Endothelial cell of umbilical vein (primary cell): ENCODE measurements at regions of chr6 and their contacts with region 1.

Region 1: DNA sequence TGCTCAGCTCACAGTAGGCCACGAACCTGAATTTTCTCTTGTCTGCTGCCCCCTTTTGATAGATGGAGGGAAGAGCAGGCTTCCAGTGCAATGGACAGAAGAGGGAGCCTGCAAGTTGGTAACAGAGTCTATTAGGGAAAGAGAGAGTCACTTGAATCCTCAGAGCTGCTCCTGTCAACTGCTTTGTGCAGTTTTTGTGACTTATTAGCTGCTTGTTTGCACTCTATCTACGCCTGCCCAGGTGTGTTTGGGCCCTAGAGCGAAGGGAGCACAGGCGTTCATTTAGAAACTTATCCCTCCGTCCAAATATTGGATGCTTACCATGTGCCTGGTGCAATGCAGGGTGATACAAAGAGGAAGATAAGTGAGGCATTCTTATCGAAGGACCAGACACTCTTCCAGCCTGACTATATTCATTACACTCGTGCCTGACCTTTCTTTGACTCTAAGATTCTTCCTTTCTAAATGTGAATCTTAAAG is 11.6 kb upstream of the SLC2A12 start:
- DNase-seq: peak; percentile 80
- H3K4me3 ChIP-seq: no peak overlapping the region
- H3K27ac ChIP-seq: no peak overlapping the region
- H3K4me1 ChIP-seq: peaks cover 10% of the 10 kb centered on the region
- H3K27me3 ChIP-seq: no peaks in the 10 kb centered on the region
- CTCF ChIP-seq: peak; percentile 85 to 89
- POLR2A ChIP-seq: no peak

Region 2: DNA sequence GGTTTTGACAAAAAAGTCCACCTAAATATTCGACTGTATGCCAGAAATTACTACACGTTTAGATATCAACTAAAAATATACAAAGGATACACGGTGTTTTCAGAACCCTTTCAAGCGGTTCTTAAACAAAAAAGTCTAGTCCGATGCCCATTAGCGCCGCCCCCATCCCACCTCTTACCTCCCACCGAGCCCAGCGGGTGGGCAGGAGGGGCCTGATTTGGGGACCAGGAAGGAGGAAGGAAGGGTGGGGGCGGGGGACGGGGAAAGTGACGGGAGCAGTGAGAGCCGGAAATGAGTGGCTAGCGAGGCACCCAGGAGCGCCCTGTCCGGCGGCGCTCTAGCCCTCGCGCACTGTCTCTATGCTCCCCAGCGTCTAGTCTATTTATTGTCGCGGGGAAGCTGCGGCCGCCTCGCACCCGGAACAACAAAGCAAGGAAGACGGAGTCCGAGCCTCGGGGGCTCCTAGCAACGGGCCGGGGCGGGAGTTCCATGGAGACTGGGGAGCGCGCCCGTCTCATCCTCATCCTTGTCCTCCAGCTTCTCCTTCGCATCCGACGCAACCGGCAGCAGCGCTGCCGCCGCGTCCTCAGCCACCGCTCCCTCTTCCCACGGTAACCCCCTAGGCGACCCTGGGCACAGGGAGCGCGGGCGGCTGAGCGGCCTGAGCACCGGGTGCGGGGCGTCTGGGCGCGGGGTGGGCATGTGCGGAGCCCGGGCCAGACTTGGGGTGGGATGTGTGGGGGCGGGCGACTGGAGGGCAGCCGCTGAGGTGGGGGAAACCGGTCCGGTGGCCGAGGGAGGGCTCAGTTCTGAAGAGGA is 111.0 kb before region 1 on chr6 and contains the start of gene TBPL1:
- CTCF ChIA-PET with region 1: interaction called, 26 read pairs
- POLR2A ChIA-PET with region 1: no interaction called
- dilution Hi-C with region 1: no loop called
- intact Hi-C with region 1: loop called (anchors 1 kb)
- DNase-seq: peak; percentile 96
- H3K4me3 ChIP-seq: peak within 1 kb of the TSS; percentile 79 to 96 (median 86)
- H3K27ac ChIP-seq: peak within 1 kb of the TSS; percentile 88
- H3K4me1 ChIP-seq: peaks cover 21% of the 10 kb centered on the region
- H3K27me3 ChIP-seq: peaks cover 0 to 7% of the 10 kb centered on the region in 2 experiments
- CTCF ChIP-seq: no peak
- POLR2A ChIP-seq: peak; percentile 74
- total RNA-seq, gene TBPL1: 31.2 and 33.4 TPM in 2 replicates

Region 3: DNA sequence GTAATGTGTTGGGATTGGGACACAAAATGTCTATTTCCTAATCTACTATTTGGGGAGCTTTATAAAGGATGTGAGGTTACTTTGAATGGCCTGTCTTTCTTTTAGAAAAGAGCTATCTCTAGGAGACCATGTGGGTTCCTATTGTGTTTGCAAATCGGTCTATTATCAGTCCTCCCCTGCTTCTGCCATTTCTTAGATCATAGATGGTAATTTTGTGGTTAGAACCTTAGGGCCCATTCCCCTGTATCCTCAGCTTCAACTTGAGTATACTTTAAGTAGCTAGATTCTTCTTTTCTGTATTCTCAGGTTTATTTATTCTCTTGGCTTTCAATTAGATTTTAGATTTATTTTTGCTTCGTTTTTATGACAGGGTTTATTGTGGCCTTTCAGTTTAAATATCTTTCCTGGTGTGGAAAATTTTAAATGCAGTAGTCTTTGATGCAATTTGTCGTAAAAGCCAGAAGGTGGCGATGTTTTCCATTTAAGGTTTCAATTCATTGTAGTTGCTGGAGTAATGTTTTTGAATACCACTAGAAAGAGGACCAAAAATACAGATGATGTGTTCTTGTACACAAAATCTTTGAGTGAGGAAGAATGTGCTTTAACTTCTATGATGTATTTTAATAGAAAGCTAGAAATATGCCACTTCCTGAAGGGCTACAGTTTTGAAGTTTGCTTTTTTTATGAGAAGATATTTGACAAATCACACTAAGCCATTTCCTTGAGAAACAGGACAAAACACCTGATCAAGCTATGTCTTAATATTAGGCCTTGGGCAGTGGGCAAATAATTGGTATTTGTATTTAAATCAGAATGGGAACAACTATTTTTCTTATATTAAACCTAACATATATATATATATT is 90.7 kb before region 1 on chr6:
- CTCF ChIA-PET with region 1: interaction called, 169 read pairs
- POLR2A ChIA-PET with region 1: no interaction called
- dilution Hi-C with region 1: no loop called
- intact Hi-C with region 1: loop called (anchors 1 kb)
- DNase-seq: peak; percentile 64
- H3K4me3 ChIP-seq: no peak overlapping the region
- H3K27ac ChIP-seq: no peak overlapping the region
- H3K4me1 ChIP-seq: peaks cover 4% of the 10 kb centered on the region
- H3K27me3 ChIP-seq: no peaks in the 10 kb centered on the region
- CTCF ChIP-seq: peak; percentile 42 to 45
- POLR2A ChIP-seq: no peak

Region 4: DNA sequence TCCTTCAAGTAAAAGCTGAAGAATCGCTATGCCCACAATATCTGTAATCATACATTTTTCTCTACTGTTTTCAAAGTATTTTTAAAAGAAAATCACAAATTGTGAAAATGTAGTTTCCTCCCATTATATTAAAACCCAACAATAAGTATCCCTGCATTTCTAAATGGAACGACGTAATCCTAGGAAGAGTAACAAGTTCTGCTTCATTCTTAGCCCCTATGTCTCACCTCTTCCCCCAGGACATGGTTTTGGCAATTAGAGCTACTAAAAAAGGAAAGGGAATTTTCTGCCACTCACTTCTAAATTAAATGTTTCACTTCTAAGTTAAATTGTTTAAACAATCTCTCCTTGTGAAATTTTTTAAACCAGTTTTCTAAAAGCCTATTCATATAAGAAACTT is 63.6 kb before region 1 on chr6:
- CTCF ChIA-PET with region 1: interaction called, 12 read pairs
- POLR2A ChIA-PET with region 1: no interaction called
- dilution Hi-C with region 1: no loop called
- intact Hi-C with region 1: no loop called
- DNase-seq: no peak
- H3K4me3 ChIP-seq: no peak overlapping the region
- H3K27ac ChIP-seq: no peak overlapping the region
- H3K4me1 ChIP-seq: no peaks in the 10 kb centered on the region
- H3K27me3 ChIP-seq: peaks cover 0 to 5% of the 10 kb centered on the region in 2 experiments
- CTCF ChIP-seq: no peak
- POLR2A ChIP-seq: no peak

Region 5: DNA sequence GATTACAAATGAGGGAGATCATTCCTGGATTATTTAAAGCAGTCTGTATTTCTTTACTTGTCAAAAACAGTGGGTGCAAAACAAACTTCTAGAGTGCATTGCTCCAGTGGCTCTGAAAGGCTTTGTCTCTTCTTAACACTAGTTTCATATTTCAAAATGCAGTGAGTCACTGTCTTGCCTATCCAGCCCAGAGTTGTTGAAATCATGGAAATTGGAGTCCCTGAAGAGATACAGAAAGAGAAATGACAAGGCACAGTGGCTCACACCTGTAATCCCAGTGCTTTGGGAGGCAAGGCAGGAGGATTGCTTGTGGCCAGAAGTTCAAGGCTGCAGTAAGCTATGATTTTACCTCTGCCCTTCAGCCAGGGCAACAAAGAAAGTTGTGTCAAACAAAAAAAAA is 22.9 kb before region 1 on chr6:
- CTCF ChIA-PET with region 1: interaction called, 17 read pairs
- POLR2A ChIA-PET with region 1: no interaction called
- dilution Hi-C with region 1: no loop called
- intact Hi-C with region 1: no loop called
- DNase-seq: no peak
- H3K4me3 ChIP-seq: no peak overlapping the region
- H3K27ac ChIP-seq: no peak overlapping the region
- H3K4me1 ChIP-seq: no peaks in the 10 kb centered on the region
- H3K27me3 ChIP-seq: peaks cover 0 to 2% of the 10 kb centered on the region in 2 experiments
- CTCF ChIP-seq: no peak
- POLR2A ChIP-seq: no peak

Region 6: DNA sequence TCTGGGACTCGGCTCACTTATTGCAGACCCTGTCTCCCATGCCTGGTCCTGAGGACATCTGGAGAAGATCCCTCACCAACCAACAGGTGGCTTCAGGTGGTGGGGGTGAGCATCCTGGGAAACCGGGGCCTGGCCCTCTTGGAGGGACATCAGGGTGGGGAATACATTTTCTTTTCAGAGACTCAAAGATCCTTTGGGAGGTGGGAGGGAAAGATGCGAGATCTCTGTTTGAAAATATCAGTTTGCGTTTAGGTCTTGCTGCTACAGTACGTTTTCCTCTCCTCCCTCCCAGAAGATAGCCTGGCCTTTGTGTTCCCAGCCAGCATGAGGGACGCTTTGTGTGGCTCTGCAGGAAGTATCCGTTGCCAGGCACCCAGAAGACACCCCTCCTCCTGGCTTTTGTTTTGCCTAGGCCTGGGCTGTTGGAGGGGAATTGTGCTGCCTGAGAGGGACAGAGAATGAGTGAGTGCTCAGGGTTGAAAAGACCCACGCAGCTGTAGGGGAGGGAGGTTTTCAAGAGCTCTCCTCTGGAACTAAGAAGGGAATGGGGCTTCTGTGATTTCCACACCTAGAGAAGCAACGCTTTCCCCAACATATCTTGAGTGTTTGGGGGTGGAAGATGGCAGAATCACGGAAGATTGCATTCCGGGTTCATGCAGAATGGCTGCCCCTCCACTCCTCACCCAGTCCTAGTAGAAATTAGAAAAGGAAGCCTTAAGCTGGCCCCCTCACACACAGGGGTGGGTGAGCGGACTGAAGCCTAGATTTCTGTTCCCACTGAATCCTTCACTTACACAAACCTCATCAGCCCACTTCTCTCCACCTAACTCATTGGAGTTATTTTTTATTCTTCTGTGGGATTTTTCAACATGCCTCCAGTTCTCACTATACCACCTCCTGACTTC is 10.4 kb after region 1 on chr6:
- CTCF ChIA-PET with region 1: interaction called, 38 read pairs
- POLR2A ChIA-PET with region 1: no interaction called
- dilution Hi-C with region 1: no loop called
- intact Hi-C with region 1: no loop called
- DNase-seq: peak; percentile 33
- H3K4me3 ChIP-seq: no peak overlapping the region
- H3K27ac ChIP-seq: no peak overlapping the region
- H3K4me1 ChIP-seq: peaks cover 10% of the 10 kb centered on the region
- H3K27me3 ChIP-seq: peaks cover 4% of the 10 kb centered on the region in 2 experiments
- CTCF ChIP-seq: no peak
- POLR2A ChIP-seq: no peak

Region 7: DNA sequence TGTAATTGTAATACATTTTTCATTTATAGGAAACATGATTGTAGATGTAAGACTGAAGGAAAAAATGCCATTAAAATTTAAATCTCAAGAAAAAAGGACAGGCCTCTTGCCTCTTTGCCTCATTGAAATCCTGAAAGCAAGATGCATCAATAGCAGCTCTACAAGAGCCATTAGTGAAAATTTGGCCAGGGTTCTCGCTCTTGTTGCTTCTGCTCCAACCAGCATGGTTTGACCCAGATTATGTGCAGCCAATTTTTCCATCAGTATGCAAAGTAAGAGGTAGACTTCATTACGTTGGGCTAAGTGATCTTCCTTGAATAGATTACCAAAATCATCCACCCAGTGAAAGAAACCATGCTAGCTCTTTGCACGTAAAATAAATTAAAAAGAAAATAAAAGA is 147.3 kb after region 1 on chr6:
- CTCF ChIA-PET with region 1: no interaction called
- POLR2A ChIA-PET with region 1: no interaction called
- dilution Hi-C with region 1: no loop called
- intact Hi-C with region 1: no loop called
- DNase-seq: no peak
- H3K4me3 ChIP-seq: no peak overlapping the region
- H3K27ac ChIP-seq: no peak overlapping the region
- H3K4me1 ChIP-seq: no peaks in the 10 kb centered on the region
- H3K27me3 ChIP-seq: no peaks in the 10 kb centered on the region
- CTCF ChIP-seq: no peak
- POLR2A ChIP-seq: no peak